CD4-positive, alpha-beta memory T cell (primary cell): ENCODE measurements at regions of chr10 and their contacts with region 1.

Region 1: GRCh38 chr10:6473901-6474370 is 106.1 kb downstream of the PRKCQ start:
- DNase-seq: peak; percentile 60 to 74 (median 69)
- H3K4me3 ChIP-seq: peak overlapping the region; percentile 32 to 56
- H3K4me3 Mint-ChIP-seq: peak overlapping the region; percentile 82 to 90 (median 88)
- H3K27ac ChIP-seq: peak overlapping the region; percentile 85
- H3K27ac Mint-ChIP-seq: peak overlapping the region; percentile 93 to 99 (median 95)
- H3K4me1 ChIP-seq: peaks cover 44% of the 10 kb centered on the region
- H3K4me1 Mint-ChIP-seq: peaks cover 43 to 67% (median 56%) of the 10 kb centered on the region in 4 donors
- H3K27me3 ChIP-seq: no peaks in the 10 kb centered on the region
- H3K27me3 Mint-ChIP-seq: no peaks in the 10 kb centered on the region

Region 2: DNA sequence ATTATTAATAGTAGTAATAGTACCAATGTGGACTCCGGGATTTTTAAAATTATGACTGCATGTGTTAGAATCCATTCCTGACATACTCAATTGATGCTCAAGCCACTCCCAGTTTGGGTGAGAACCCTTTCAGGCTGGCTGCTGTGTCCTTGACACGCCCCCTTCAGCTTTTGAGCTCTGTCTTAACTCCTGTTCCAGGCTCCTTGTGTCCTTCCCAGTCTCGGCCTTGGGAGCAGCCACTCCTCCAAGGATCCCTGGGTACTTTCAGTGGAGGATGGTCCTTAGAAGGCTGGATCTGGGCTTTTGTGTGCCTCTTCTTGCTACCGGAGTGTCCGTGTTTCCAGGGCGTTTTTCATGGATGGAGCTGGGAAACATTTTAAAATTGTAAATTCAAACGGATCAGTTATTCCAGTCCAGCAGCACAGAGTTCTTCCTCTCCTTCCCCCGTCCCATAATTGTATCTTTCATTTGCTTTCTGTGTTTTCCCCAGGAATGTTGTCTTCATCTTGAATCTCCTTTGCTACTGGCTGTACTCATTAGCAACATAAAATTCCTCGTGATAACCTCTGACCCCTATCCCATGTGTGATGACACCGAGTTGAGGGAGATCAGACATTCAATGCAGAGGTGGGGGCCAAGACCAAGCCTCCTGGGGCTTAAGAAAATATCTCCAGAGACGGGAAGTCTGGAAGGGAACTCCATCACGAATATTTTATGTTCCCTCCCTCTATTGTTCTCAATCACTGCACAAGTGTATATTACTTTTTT is 311.2 kb before region 1 on chr10:
- CTCF ChIA-PET with region 1: no interaction called
- POLR2A ChIA-PET with region 1: no interaction called
- intact Hi-C with region 1: no loop called
- DNase-seq: no peak
- H3K4me3 ChIP-seq: peak overlapping the region in 1 of 2 donors; percentile 77
- H3K4me3 Mint-ChIP-seq: peak overlapping the region; percentile 58 to 79 (median 74)
- H3K27ac ChIP-seq: peak overlapping the region; percentile 89
- H3K27ac Mint-ChIP-seq: peak overlapping the region; percentile 82 to 94 (median 90)
- H3K4me1 ChIP-seq: peaks cover 47% of the 10 kb centered on the region
- H3K4me1 Mint-ChIP-seq: peaks cover 27 to 56% (median 43%) of the 10 kb centered on the region in 4 donors
- H3K27me3 ChIP-seq: no peaks in the 10 kb centered on the region
- H3K27me3 Mint-ChIP-seq: no peaks in the 10 kb centered on the region

Region 3: GRCh38 chr10:6542999-6543430 is 69.1 kb after region 1 on chr10:
- CTCF ChIA-PET with region 1: interaction called, 7 read pairs
- POLR2A ChIA-PET with region 1: interaction called, 11 read pairs
- intact Hi-C with region 1: loop called (anchors 1 kb)
- DNase-seq: peak; percentile 70 to 81 (median 78)
- H3K4me3 ChIP-seq: peak overlapping the region in 1 of 2 donors; percentile 30
- H3K4me3 Mint-ChIP-seq: peak overlapping the region; percentile 88 to 98 (median 93)
- H3K27ac ChIP-seq: peak overlapping the region; percentile 66
- H3K27ac Mint-ChIP-seq: peak overlapping the region; percentile 96 to 100 (median 99)
- H3K4me1 ChIP-seq: peaks cover 83% of the 10 kb centered on the region
- H3K4me1 Mint-ChIP-seq: peaks cover 67 to 86% (median 77%) of the 10 kb centered on the region in 4 donors
- H3K27me3 ChIP-seq: no peaks in the 10 kb centered on the region
- H3K27me3 Mint-ChIP-seq: no peaks in the 10 kb centered on the region

Region 4: GRCh38 chr10:6607778-6608177 is 133.8 kb after region 1 on chr10:
- CTCF ChIA-PET with region 1: interaction called, 6 read pairs
- POLR2A ChIA-PET with region 1: interaction called, 10 read pairs
- intact Hi-C with region 1: no loop called
- DNase-seq: no peak
- H3K4me3 ChIP-seq: no peak overlapping the region
- H3K4me3 Mint-ChIP-seq: peak overlapping the region in 1 of 8 donors; percentile 72
- H3K27ac ChIP-seq: peak overlapping the region; percentile 43
- H3K27ac Mint-ChIP-seq: peak overlapping the region; percentile 73 to 97 (median 93)
- H3K4me1 ChIP-seq: peaks cover 47% of the 10 kb centered on the region
- H3K4me1 Mint-ChIP-seq: peaks cover 43 to 74% (median 53%) of the 10 kb centered on the region in 4 donors
- H3K27me3 ChIP-seq: no peaks in the 10 kb centered on the region
- H3K27me3 Mint-ChIP-seq: no peaks in the 10 kb centered on the region

Region 5: GRCh38 chr10:6667679-6668270 is 193.8 kb after region 1 on chr10:
- CTCF ChIA-PET with region 1: no interaction called
- POLR2A ChIA-PET with region 1: interaction called, 4 read pairs
- intact Hi-C with region 1: loop called (anchors 1 kb)
- DNase-seq: peak in 4 of 5 donors; percentile 15 to 34 (median 26)
- H3K4me3 ChIP-seq: no peak overlapping the region
- H3K4me3 Mint-ChIP-seq: peak overlapping the region in 1 of 8 donors; percentile 10
- H3K27ac ChIP-seq: no peak overlapping the region
- H3K27ac Mint-ChIP-seq: no peak overlapping the region
- H3K4me1 ChIP-seq: peaks cover 22% of the 10 kb centered on the region
- H3K4me1 Mint-ChIP-seq: peaks cover 15 to 28% (median 21%) of the 10 kb centered on the region in 4 donors
- H3K27me3 ChIP-seq: no peaks in the 10 kb centered on the region
- H3K27me3 Mint-ChIP-seq: no peaks in the 10 kb centered on the region